Caco-2 (cell line): ENCODE measurements at regions of chr3 and their contacts with region 1.

Region 1: GRCh38 chr3:38843898-38844297 is 27.9 kb upstream of the SCN10A start:
- DNase-seq: peak in 1 of 2 experiments; percentile 17
- H3K4me3 ChIP-seq: no peak overlapping the region
- H3K4me3 Mint-ChIP-seq: no peak overlapping the region
- H3K27ac Mint-ChIP-seq: no peak overlapping the region
- H3K4me1 ChIP-seq: no peaks in the 10 kb centered on the region
- H3K4me1 Mint-ChIP-seq: no peaks in the 10 kb centered on the region
- H3K27me3 ChIP-seq: no peaks in the 10 kb centered on the region
- H3K27me3 Mint-ChIP-seq: peaks cover 14% of the 10 kb centered on the region
- CTCF ChIP-seq: peak; percentile 34 to 37

Region 2: GRCh38 chr3:38755130-38755529 is 88.8 kb before region 1 on chr3:
- CTCF ChIA-PET with region 1: no interaction called
- POLR2A ChIA-PET with region 1: no interaction called
- intact Hi-C with region 1: loop called (anchors 10 kb)
- DNase-seq: no peak
- H3K4me3 ChIP-seq: no peak overlapping the region
- H3K4me3 Mint-ChIP-seq: no peak overlapping the region
- H3K27ac Mint-ChIP-seq: no peak overlapping the region
- H3K4me1 ChIP-seq: no peaks in the 10 kb centered on the region
- H3K4me1 Mint-ChIP-seq: no peaks in the 10 kb centered on the region
- H3K27me3 ChIP-seq: no peaks in the 10 kb centered on the region
- H3K27me3 Mint-ChIP-seq: peaks cover 7% of the 10 kb centered on the region
- CTCF ChIP-seq: no peak